K562 (cell line): ENCODE measurements at regions of chr2 and their contacts with region 1.

Region 1: DNA sequence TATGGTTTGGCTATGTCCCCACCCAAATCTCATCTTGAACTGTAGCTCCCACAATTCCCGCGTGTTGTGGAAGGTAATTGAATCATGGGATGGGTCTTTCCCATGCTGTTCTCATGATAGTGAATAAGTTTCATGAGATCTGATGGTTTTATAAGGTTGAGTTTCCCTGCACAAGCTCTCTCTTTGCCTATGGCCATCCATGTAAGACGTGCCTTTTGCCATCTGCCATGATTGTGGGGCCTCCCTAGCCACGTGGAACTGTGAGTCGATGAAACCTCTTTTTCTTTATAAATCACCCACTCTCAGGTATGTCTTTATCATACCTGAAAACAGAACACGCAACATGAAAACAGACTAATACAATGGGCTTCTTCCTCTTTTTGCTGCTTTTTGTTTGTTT is 11.2 kb upstream of the C1D start:
- DNase-seq: no peak
- ATAC-seq: no peak
- H3K4me3 ChIP-seq: no peak overlapping the region
- H3K27ac ChIP-seq: no peak overlapping the region
- H3K4me1 ChIP-seq: no peaks in the 10 kb centered on the region
- H3K27me3 ChIP-seq: no peaks in the 10 kb centered on the region
- CTCF ChIP-seq: no peak
- EP300 ChIP-seq: no peak
- POLR2A ChIP-seq: no peak
- RAD21 ChIP-seq: no peak

Region 2: GRCh38 chr2:68062680-68063387 is 11.2 kb before region 1 on chr2 and contains the start of gene C1D:
- CTCF ChIA-PET with region 1: no interaction called
- POLR2A ChIA-PET with region 1: interaction called, 10 read pairs
- in situ Hi-C with region 1: no loop called
- intact Hi-C with region 1: no loop called
- DNase-seq: peak; percentile 90 to 97 (median 91)
- ATAC-seq: peak; percentile 92
- H3K4me3 ChIP-seq: peak within 1 kb of the TSS; percentile 60
- H3K27ac ChIP-seq: peak within 1 kb of the TSS; percentile 82
- H3K4me1 ChIP-seq: peaks cover 11 to 13% of the 10 kb centered on the region in 2 experiments
- H3K27me3 ChIP-seq: no peaks in the 10 kb centered on the region
- CTCF ChIP-seq: no peak; a peak in 1 of 6 replicates
- EP300 ChIP-seq: no peak
- POLR2A ChIP-seq: peak; percentile 91
- RAD21 ChIP-seq: no peak
- polyA plus RNA-seq, gene C1D: 120 to 123 TPM

Region 3: DNA sequence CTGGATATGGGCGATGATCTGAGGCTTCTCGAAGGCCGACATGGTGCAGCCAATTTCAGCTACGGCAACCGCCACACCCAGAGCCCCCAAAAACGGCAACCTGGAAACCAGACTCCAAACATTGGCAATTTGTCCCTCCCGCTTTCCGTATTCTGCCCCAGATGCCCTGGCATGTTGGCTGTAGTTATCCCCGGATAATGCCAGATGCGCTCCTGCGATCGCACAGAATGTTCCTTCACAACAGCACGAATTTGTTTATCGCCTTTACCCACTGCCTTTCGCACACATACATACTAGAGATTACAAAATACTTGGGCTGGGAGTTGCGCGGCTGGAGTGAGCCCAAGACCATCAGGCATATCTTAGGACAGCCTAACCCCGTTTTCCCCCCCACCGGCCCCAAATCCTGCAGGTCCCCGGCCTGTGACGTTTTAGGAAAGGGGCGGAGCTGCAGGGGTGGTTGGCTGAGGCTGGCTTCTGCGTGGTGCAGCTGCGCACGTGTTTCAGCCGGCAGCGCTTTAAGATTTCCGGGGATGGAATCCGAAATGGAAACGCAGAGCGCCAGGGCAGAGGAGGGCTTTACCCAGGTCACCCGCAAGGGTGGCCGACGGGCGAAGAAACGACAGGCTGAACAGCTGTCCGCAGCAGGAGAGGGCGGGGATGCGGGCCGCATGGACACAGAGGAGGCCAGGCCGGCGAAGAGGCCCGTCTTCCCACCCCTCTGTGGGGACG is 83.5 kb after region 1 on chr2 and contains the start of gene PNO1:
- CTCF ChIA-PET with region 1: no interaction called
- POLR2A ChIA-PET with region 1: no interaction called
- in situ Hi-C with region 1: no loop called
- intact Hi-C with region 1: no loop called
- DNase-seq: peak; percentile 96 to 98 (median 98)
- ATAC-seq: peak; percentile 94
- H3K4me3 ChIP-seq: peak within 1 kb of the TSS; percentile 71
- H3K27ac ChIP-seq: peak within 1 kb of the TSS; percentile 98
- H3K4me1 ChIP-seq: peaks cover 2 to 13% of the 10 kb centered on the region in 2 experiments; a peak in 2 of 5 replicates
- H3K27me3 ChIP-seq: no peaks in the 10 kb centered on the region
- CTCF ChIP-seq: peak in 1 of 3 experiments; percentile 2; a peak in 1 of 6 replicates
- EP300 ChIP-seq: peak; percentile 48
- POLR2A ChIP-seq: peak; percentile 82
- RAD21 ChIP-seq: no peak
- polyA plus RNA-seq, gene PNO1: 11.8 to 18.6 TPM

Region 4: DNA sequence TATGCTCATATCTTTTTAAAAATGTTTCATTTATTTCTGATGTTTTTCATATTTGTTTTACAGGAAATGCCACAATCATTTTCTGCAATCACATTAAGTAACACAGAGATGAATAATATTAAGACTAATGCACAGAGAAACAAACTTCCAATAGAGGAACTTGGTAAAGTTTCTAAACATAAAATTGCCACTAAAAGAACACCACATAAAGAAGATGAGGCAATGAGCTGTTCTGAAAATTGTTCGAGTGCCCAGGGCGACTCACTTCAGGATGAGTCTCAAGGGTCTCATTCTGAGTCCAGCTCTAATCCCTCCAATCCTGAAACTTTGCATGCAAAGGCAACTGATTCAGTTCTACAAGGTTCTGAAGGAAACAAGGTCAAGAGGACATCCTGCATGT is 463.8 kb after region 1 on chr2:
- CTCF ChIA-PET with region 1: no interaction called
- POLR2A ChIA-PET with region 1: no interaction called
- in situ Hi-C with region 1: no loop called
- intact Hi-C with region 1: no loop called
- DNase-seq: no peak
- ATAC-seq: no peak
- H3K4me3 ChIP-seq: no peak overlapping the region
- H3K27ac ChIP-seq: no peak overlapping the region
- H3K4me1 ChIP-seq: peaks cover 0 to 10% of the 10 kb centered on the region in 2 experiments; a peak in 4 of 5 replicates
- H3K27me3 ChIP-seq: no peaks in the 10 kb centered on the region
- CTCF ChIP-seq: no peak
- EP300 ChIP-seq: no peak
- POLR2A ChIP-seq: no peak
- RAD21 ChIP-seq: no peak